Right ventricle myocardium inferior (tissue), 1 donor: ENCODE measurements at regions of chr3 and their contacts with region 1.

Region 1: DNA sequence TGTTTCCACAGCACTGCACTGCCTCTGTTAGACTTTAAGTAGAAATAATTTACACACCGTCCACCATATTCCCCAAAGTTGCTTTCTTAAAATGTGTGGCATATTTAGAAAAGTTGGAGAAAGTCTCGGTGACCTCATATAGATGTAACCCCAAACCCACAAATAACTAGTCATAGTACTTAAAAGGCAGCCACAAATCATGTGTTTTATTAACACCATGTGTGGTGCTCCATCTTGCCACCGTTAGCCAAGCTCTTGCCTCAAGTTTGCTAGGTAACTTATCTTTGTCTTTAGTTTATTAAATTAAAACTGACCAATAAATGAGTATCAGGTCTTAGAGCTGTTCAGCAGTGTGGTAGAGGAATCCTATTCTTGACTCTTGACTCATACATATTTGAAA is 257.9 kb downstream of the UBE2E2 start:
- DNase-seq: no peak
- ATAC-seq: no peak

Region 2: GRCh38 chr3:23495507-23495906 is 34.4 kb after region 1 on chr3:
- intact Hi-C with region 1: loop called (anchors 5 kb)
- DNase-seq: no peak
- ATAC-seq: peak; percentile 70

Region 3: GRCh38 chr3:23800731-23801130 is 339.7 kb after region 1 on chr3:
- intact Hi-C with region 1: no loop called
- DNase-seq: no peak
- ATAC-seq: peak; percentile 54